ENCODE measurements at regions of chr18 and their contacts with region 1.

Region 1: DNA sequence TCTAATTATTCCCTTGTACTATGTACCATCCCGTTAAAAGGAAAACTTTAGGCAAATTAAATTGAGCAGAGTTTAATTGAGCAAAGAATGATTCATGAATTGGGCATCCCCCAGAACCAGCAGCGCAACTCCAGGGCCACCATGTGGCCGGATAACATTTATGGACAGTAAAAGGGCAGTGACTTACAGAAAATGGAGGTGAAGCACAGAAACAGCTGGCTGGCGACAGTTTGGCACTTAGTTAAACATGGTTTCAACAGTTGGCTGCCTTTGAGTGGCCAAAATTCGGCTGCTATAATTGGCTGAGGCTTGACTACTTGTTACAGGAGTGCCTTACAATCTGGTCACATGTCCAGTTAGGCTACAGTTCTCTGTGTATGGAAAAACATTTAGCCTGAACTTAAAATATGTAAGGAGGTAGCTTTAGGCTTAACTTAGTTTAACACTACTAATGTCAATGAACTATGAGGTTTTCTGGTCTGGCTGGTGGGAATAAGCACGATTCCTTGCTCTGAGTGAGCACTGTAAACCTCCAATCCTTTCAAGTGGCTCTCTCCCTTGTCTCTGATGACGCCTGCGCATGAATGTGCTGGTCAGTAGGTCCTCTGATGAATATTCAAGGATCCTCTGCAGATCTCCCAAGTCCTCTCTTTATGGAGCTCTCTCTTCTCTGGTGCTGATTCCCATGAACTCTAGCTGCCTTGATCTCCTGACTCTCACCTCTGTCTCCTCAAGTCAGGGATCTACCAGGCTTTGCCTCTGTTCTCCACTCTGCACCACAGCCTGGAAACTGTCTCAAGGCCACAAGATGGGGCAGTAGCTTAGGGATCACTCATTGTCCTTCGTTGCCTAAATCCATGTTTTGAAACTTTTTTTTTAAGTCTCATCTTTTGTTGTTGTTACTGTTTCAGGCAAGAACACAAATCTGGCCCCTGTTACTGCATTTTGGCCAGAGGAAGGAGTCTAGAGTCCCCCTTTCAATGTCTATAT is 24.4 kb upstream of the RAB31 start:
- DNase-seq: peak in 3 of 4 experiments; percentile 51 to 91 (median 63)
- ATAC-seq: peak; percentile 91
- H3K4me3 ChIP-seq: no peak overlapping the region
- H3K27ac ChIP-seq: peak overlapping the region; percentile 81
- H3K4me1 ChIP-seq: peaks cover 10 to 49% of the 10 kb centered on the region in 2 experiments; a peak in 4 of 5 replicates
- H3K27me3 ChIP-seq: no peaks in the 10 kb centered on the region
- CTCF ChIP-seq: peak; percentile 76 to 86 (median 81)
- EP300 ChIP-seq: 0 out of 2 replicates have a peak, but pooled peaks have one; percentile 15
- POLR2A ChIP-seq: no peak
- RAD21 ChIP-seq: peak; percentile 95 to 97

Region 2: GRCh38 chr18:9771261-9771976 is 87.7 kb after region 1 on chr18:
- CTCF ChIA-PET with region 1: interaction called, 3 read pairs
- POLR2A ChIA-PET with region 1: no interaction called
- in situ Hi-C with region 1: no loop called
- intact Hi-C with region 1: loop called (anchors 1 kb)
- DNase-seq: peak; percentile 81 to 91 (median 88)
- ATAC-seq: peak; percentile 99
- H3K4me3 ChIP-seq: no peak overlapping the region
- H3K27ac ChIP-seq: peak overlapping the region; percentile 23; the same call in 1 of the 3 replicates
- H3K4me1 ChIP-seq: peaks cover 11 to 21% of the 10 kb centered on the region in 2 experiments
- H3K27me3 ChIP-seq: no peaks in the 10 kb centered on the region
- CTCF ChIP-seq: peak; percentile 97 to 100 (median 98)
- EP300 ChIP-seq: no peak
- POLR2A ChIP-seq: no peak
- RAD21 ChIP-seq: peak; percentile 90 to 98

Region 3: GRCh38 chr18:9869715-9870430 is 186.2 kb after region 1 on chr18:
- CTCF ChIA-PET with region 1: no interaction called
- POLR2A ChIA-PET with region 1: interaction called, 3 read pairs
- in situ Hi-C with region 1: no loop called
- intact Hi-C with region 1: loop called (anchors 10 kb)
- DNase-seq: peak; percentile 83 to 97 (median 89)
- ATAC-seq: peak; percentile 89
- H3K4me3 ChIP-seq: no peak overlapping the region
- H3K27ac ChIP-seq: peak overlapping the region; percentile 92
- H3K4me1 ChIP-seq: peaks cover 23 to 67% of the 10 kb centered on the region in 2 experiments
- H3K27me3 ChIP-seq: no peaks in the 10 kb centered on the region
- CTCF ChIP-seq: no peak
- EP300 ChIP-seq: peak; percentile 99
- POLR2A ChIP-seq: peak; percentile 42; the same call in 1 of the 2 replicates
- RAD21 ChIP-seq: peak in 1 of 2 experiments; percentile 47; a peak in 3 of 4 replicates

Measured in K562 (cell line).